ENCODE measurements at regions of chr12 and their contacts with region 1.

Region 1: GRCh38 chr12:132761032-132761920 is at the start of gene ANKLE2:
- DNase-seq: peak in 1 of 2 donors; percentile 73
- H3K4me3 ChIP-seq: peak within 1 kb of the TSS; percentile 100
- H3K27ac ChIP-seq: peak within 1 kb of the TSS; percentile 97 to 99
- H3K4me1 ChIP-seq: peaks cover 13% of the 10 kb centered on the region in 2 donors
- H3K27me3 ChIP-seq: no peaks in the 10 kb centered on the region
- CTCF ChIP-seq: no peak
- total RNA-seq, gene ANKLE2: 54.2 TPM

Region 2: GRCh38 chr12:132657004-132657683 is 104.1 kb before region 1 on chr12:
- intact Hi-C with region 1: no loop called
- DNase-seq: no peak
- H3K4me3 ChIP-seq: no peak overlapping the region
- H3K27ac ChIP-seq: no peak overlapping the region
- H3K4me1 ChIP-seq: no peaks in the 10 kb centered on the region
- H3K27me3 ChIP-seq: no peaks in the 10 kb centered on the region
- CTCF ChIP-seq: no peak

Region 3: DNA sequence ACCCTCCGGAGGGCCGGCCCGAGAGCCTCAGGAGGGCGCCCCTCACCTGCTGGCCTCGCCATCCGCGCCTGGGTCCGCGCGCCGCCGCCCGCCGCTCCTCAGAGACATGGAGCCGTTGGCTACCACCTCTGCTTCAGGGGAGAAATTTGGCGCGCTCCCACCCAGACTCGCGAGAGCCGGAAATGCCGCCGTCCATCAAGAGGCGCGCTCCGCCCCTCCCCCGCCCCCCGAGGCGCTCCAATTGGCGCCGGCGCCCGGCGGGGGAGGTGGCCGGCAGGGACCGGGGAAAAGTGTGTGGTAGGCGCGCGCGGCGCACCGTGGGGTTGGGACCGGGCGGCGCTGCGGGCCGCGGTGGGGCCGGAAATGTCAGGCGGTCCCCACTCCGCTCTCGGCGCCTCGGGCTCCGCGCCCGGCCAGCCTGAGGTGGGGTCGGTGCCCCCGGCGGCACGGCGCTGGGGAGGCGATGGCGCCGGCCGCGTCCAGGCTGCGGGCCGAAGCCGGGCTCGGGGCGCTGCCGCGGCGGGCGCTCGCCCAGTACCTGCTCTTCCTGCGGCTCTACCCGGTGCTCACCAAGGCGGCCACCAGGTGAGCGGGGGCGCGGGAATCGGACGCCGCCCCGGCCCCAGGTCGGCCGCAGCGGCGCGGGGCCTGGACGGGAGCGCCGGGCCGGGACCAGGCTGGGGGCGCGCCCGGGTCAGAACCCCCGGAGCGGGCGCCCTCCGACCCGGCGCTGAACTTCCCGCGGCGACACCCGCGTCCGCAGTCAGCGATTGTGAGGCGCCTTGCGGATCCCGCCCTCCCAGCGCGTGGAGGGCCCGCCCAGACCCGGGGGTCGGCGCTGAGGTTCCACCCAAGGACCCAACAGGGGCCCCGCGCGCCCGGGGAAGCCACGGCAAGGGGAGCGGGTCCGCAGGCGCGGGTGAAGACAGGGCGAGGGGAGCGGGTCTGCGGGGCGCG is 73.8 kb before region 1 on chr12 and contains the starts of genes POLE and PXMP2:
- intact Hi-C with region 1: loop called (anchors 1 kb)
- DNase-seq: peak; percentile 84 to 98
- H3K4me3 ChIP-seq: peak within 1 kb of the TSS; percentile 91 to 94
- H3K27ac ChIP-seq: peak within 1 kb of the TSS; percentile 67 to 75
- H3K4me1 ChIP-seq: peaks cover 4 to 19% of the 10 kb centered on the region in 2 donors
- H3K27me3 ChIP-seq: no peaks in the 10 kb centered on the region
- CTCF ChIP-seq: peak in 1 of 3 experiments; percentile 44
- total RNA-seq, gene POLE: 115 TPM
- total RNA-seq, gene PXMP2: 18.8 TPM

Region 4: GRCh38 chr12:132908145-132909044 is 147.1 kb after region 1 on chr12:
- intact Hi-C with region 1: loop called (anchors 5 kb)
- DNase-seq: peak; percentile 83 to 96
- H3K4me3 ChIP-seq: peak overlapping the region; percentile 79 to 86
- H3K27ac ChIP-seq: peak overlapping the region; percentile 83 to 85
- H3K4me1 ChIP-seq: peaks cover 0 to 6% of the 10 kb centered on the region in 2 donors
- H3K27me3 ChIP-seq: no peaks in the 10 kb centered on the region
- CTCF ChIP-seq: no peak